Lower lobe of right lung (tissue), 2 donors: ENCODE measurements at regions of chr16 and their contacts with region 1.

Region 1: DNA sequence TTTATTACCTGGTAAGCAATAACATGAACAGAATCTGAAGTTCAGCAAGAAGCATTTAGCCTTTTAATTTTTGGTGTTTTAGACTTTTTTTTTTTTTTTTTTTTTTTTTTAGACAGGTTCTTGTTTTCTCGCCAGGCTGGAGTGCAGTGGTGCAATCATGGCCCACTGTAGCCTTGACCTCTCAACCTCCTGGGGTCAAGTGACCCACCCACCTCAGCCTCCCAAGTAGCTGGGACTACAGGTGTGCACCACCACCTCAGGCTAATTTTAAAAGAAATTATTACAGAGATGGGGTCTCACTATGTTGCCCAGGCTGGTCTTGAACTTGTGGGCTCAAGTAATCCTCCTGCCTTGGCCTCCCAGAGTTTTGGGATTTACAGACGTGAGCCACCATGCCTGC is 173.0 kb upstream of the RBL2 start:
- DNase-seq: no peak
- ATAC-seq: no peak
- H3K4me3 ChIP-seq: no peak overlapping the region
- H3K27ac ChIP-seq: no peak overlapping the region
- H3K4me1 ChIP-seq: no peaks in the 10 kb centered on the region
- H3K27me3 ChIP-seq: no peaks in the 10 kb centered on the region
- CTCF ChIP-seq: no peak

Region 2: GRCh38 chr16:53224951-53225533 is 36.2 kb before region 1 on chr16:
- intact Hi-C with region 1: loop called (anchors 5 kb)
- DNase-seq: no peak
- ATAC-seq: peak in 1 of 2 donors; percentile 32
- H3K4me3 ChIP-seq: no peak overlapping the region
- H3K27ac ChIP-seq: no peak overlapping the region
- H3K4me1 ChIP-seq: peaks cover 14% of the 10 kb centered on the region
- H3K27me3 ChIP-seq: no peaks in the 10 kb centered on the region
- CTCF ChIP-seq: no peak